Dorsolateral prefrontal cortex (tissue), 120 donors: ENCODE measurements at regions of chr11 and their contacts with region 1.

Region 1: GRCh38 chr11:3160252-3161031 is 4.7 kb downstream of the OSBPL5 start:
- DNase-seq: peak; percentile 82 to 96 (median 94)
- H3K4me3 ChIP-seq: peak overlapping the region; percentile 48 to 90 (median 67)
- H3K27ac ChIP-seq: peak overlapping the region in 57 of 59 donors; percentile 53 to 95 (median 88)
- H3K27me3 ChIP-seq: no peaks in the 10 kb centered on the region
- CTCF ChIP-seq: peak in 13 of 56 donors; percentile 4 to 31 (median 11)

Region 2: DNA sequence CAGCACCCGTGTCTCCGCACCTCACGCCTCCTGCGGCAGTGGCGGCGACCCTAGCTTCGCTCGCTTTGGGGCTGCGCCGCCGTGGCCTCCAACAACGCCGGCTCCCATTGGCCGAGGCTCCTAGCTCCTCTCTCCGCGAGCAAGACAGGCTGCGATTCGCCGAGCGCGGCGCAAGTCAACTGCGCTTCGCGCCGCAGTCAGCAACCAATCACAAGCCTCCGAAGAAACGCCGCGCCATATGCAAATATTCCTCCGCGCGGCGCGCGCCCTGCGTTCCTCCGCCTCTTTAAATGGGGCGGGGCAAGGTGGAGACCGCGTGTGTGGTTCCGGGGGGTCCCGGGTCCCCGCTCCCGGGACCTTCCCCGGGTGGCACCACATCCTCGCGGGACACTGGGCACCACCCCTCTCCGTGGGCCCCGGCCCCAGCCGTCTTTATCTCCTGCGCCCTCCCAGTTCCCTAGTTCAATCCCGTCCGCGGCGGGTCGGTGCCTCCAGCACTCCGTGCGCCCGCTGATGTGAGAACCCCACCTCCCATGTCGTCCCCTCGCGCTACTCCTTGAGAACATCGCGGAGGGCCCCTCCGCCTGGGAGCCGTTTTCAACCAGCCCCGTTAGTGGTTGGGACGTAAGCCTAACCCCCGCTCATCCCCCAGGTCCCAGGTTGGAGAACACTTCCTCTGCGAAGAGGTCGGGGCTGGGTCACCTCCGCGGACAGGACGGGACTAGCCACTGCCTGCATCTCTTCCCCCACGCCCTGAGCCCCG is 168.0 kb before region 1 on chr11 and contains the start of gene NAP1L4:
- intact Hi-C with region 1: loop called in 1 of 2 experiments (anchors 10 kb)
- DNase-seq: peak; percentile 94 to 97 (median 96)
- H3K4me3 ChIP-seq: peak within 1 kb of the TSS; percentile 62 to 98 (median 88)
- H3K27ac ChIP-seq: peak within 1 kb of the TSS; percentile 23 to 94 (median 84)
- H3K27me3 ChIP-seq: no peaks in the 10 kb centered on the region
- CTCF ChIP-seq: peak in 19 of 56 donors; percentile 0 to 47 (median 16)
- total RNA-seq, gene NAP1L4: 135 to 252 (median 182) TPM

Region 3: GRCh38 chr11:3049430-3050243 is 110.8 kb before region 1 on chr11:
- intact Hi-C with region 1: loop called (anchors 2 to 5 kb)
- DNase-seq: peak; percentile 49 to 97 (median 94)
- H3K4me3 ChIP-seq: peak overlapping the region in 51 of 59 donors; percentile 2 to 59 (median 33)
- H3K27ac ChIP-seq: peak overlapping the region; percentile 56 to 99 (median 94)
- H3K27me3 ChIP-seq: no peaks in the 10 kb centered on the region
- CTCF ChIP-seq: peak in 54 of 56 donors; percentile 21 to 75 (median 55)